Posterior cingulate gyrus (tissue), 11 donors: ENCODE measurements at regions of chr1 and their contacts with region 1.

Region 1: DNA sequence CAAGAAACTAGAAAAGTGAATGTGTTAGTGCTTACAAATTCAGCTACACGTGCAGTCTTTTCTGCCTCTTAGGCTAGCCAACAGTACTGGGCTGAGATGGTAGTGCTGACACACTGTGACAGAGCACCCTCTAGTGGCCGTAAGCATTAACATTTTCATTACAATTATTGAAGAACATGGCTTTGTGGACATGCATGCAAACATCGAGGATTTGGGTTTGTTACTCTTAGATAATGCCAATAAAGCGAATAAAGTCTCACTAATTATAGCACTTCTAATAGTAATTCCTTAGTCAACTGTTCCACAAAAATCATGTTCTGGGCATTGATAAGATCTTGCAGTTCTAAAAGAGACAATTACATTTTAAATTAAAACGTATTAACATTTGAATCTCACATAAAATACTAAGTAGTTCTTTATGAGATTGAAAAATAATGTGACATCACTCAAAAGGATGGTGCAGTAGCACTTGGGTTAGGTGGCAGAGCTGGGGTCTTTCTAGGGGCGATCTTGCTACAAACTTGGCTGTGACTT is 47.1 kb downstream of the MYSM1 start:
- DNase-seq: peak in 8 of 10 donors; percentile 32 to 91 (median 65)

Region 2: GRCh38 chr1:58363585-58363984 is 289.1 kb before region 1 on chr1:
- intact Hi-C with region 1: no loop called
- DNase-seq: no peak

Region 3: DNA sequence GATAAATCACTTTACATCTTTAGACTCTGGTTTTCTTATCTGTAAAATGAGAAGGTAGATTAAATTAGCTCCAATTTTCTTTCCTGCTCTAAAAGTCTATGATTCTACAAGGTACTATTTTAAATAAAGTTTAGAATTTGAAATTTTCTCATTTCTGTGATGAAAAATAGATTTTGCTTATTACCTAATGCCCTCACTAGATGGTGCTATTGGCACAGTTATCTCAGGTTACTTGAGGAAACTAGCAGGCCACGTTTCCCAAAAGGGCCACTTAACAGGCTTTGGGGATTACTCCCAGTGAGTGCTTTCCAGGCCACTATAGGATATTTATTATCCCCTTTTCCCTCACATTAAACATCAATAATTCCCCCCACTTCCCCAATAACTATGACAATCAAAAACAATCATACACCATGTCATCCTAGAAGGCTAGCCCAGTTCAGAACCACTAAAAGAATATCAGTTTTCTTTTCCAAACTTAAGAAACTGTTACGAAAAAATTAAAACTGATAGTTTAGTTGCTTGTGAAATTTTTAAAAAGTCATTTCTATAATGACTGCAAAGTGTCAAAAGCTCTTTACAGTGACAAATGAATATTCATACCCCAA is 136.8 kb before region 1 on chr1:
- intact Hi-C with region 1: loop called (anchors 1 kb)
- DNase-seq: peak in 4 of 10 donors; percentile 4 to 67 (median 14)

Region 4: GRCh38 chr1:58546520-58547308 is 106.0 kb before region 1 on chr1 and contains the start of gene OMA1:
- intact Hi-C with region 1: loop called (anchors 10 kb)
- DNase-seq: peak; percentile 89 to 99 (median 92)

Region 5: GRCh38 chr1:58857680-58858673 is 205.3 kb after region 1 on chr1:
- intact Hi-C with region 1: no loop called
- DNase-seq: no peak

Region 6: GRCh38 chr1:59198564-59198963 is 545.8 kb after region 1 on chr1:
- intact Hi-C with region 1: no loop called
- DNase-seq: no peak